A673 (cell line): ENCODE measurements at regions of chr6 and their contacts with region 1.

Region 1: GRCh38 chr6:127506894-127507293 is 12.2 kb downstream of the MTCL3 start:
- DNase-seq: no peak
- H3K4me3 ChIP-seq: no peak overlapping the region
- H3K27ac ChIP-seq: no peak overlapping the region
- H3K4me1 ChIP-seq: no peaks in the 10 kb centered on the region
- H3K27me3 ChIP-seq: no peaks in the 10 kb centered on the region
- CTCF ChIP-seq: no peak

Region 2: GRCh38 chr6:127561660-127562059 is 54.8 kb after region 1 on chr6:
- CTCF ChIA-PET with region 1: no interaction called
- POLR2A ChIA-PET with region 1: interaction called, 17 read pairs
- intact Hi-C with region 1: no loop called
- DNase-seq: no peak
- H3K4me3 ChIP-seq: no peak overlapping the region
- H3K27ac ChIP-seq: no peak overlapping the region
- H3K4me1 ChIP-seq: no peaks in the 10 kb centered on the region
- H3K27me3 ChIP-seq: no peaks in the 10 kb centered on the region
- CTCF ChIP-seq: no peak